ENCODE measurements at regions of chr9 and their contacts with region 1.

Region 1: DNA sequence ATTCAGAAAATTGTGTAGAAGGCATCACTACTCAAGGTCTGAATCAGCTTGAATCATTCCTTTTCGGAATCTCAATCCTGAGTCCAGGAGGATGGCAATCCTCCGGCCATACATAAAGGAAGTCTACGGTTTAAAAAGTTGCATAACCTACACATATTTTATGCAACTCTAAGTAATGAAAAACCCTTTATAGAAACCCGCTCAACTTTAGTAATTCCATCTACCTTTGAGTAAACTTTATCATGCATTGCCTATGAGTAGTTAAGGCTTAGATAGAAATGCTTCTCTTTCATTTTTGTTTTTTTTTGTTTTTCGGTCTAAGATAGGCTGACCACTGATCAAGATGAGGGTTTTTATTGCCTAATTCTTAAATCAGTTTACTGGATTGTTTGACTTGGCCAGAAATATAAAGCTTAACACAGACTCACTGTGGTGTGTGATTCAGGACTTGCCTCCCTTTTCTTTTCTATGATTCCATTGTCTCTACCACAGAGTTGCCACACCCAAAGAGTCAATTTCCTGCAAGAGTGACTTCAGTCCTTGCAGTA is 85.0 kb downstream of the LURAP1L start:
- DNase-seq: no peak

Region 2: DNA sequence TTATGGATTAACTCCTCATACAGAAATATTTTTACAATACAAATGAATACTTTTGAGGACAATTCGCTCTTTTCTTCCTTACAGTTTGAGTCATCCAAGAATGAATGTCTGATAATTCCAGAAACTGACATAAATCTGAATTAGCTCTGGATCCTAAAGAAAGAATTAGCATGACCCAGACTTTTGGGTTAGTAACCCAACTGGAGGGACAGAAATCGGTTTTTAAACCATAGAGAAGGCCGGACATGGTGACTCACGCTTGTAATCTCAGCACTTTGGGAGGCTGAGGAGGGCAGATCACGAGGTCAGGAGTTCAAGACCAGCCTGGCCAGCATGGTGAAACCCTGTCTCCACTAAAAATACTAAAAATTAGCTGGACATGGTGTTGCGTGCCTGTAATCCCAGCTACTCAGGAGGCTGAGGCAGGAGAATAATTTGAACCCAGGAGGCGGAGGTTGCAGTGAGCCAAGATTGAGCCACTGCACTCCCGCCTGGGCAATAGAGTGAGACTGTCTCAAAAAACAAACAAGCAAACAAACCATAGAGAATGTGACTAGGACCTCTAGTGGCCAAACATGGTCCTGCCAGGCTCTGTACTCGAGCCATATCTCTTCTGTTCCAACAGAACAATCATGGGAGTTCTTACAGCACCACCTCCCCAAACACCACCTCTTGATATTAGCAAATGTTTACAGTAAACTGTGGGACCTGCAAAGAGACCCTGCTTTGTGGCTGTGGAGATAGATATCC is 40.2 kb before region 1 on chr9:
- intact Hi-C with region 1: loop called (anchors 5 kb)
- DNase-seq: no peak